ENCODE measurements at regions of chr1 and their contacts with region 1.

Region 1: GRCh38 chr1:67500413-67500959 is 70.3 kb upstream of the SERBP1 start:
- DNase-seq: peak; percentile 77 to 85 (median 81)
- H3K4me3 ChIP-seq: no peak overlapping the region
- H3K4me3 Mint-ChIP-seq: no peak overlapping the region
- H3K27ac ChIP-seq: no peak overlapping the region
- H3K27ac Mint-ChIP-seq: peak overlapping the region in 1 of 7 donors; percentile 29
- H3K4me1 ChIP-seq: peaks cover 2% of the 10 kb centered on the region
- H3K4me1 Mint-ChIP-seq: peaks cover 3 to 5% (median 4%) of the 10 kb centered on the region in 4 donors
- H3K27me3 ChIP-seq: no peaks in the 10 kb centered on the region
- H3K27me3 Mint-ChIP-seq: peaks cover 1 to 3% of the 10 kb centered on the region in 2 donors

Region 2: DNA sequence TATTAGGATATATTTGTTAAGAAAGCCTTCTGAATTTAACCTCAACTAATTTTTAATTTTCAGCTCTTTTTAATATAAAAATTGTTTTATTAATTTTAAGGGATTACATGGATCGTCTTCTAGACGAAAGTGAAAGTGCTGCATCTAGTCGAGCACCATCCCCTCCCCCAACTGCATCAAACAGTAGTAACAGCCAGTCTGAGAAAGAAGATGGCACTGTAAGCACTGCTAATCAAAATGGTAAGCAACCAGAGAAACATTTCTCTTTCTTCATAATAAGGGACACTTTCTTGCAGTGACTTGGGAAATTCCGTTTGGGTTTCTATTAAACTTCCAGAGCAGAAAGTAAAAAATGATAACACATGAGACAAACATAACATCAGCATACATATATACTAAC is 518.8 kb before region 1 on chr1:
- CTCF ChIA-PET with region 1: interaction called, 3 read pairs
- POLR2A ChIA-PET with region 1: no interaction called
- intact Hi-C with region 1: loop called (anchors 5 kb)
- DNase-seq: peak; percentile 55 to 72 (median 67)
- H3K4me3 ChIP-seq: peak overlapping the region in 1 of 2 donors; percentile 9
- H3K4me3 Mint-ChIP-seq: peak overlapping the region; percentile 2 to 80 (median 72)
- H3K27ac ChIP-seq: peak overlapping the region; percentile 61
- H3K27ac Mint-ChIP-seq: peak overlapping the region; percentile 53 to 94 (median 77)
- H3K4me1 ChIP-seq: peaks cover 25% of the 10 kb centered on the region
- H3K4me1 Mint-ChIP-seq: peaks cover 20 to 37% (median 22%) of the 10 kb centered on the region in 4 donors
- H3K27me3 ChIP-seq: no peaks in the 10 kb centered on the region
- H3K27me3 Mint-ChIP-seq: no peaks in the 10 kb centered on the region

Region 3: DNA sequence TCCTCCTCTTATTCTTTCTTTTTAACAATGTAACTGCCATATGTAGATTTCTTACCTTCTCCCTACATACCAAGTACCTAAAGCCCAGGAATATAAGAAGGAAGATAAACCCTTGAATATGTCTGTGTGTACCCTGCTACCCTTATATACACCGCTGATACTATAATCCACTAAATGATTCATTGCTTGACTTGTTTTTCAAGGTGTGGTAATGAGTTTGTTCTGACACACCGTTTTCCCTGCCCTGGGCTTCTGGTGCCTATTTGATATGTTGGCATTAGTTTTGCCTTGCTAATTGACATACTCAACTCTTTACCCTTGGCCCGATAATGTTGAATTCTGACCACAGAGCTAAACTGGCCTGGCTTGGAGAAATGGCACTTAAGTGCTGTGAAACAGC is 269.9 kb before region 1 on chr1:
- CTCF ChIA-PET with region 1: interaction called, 64 read pairs
- POLR2A ChIA-PET with region 1: interaction called, 3 read pairs
- intact Hi-C with region 1: loop called (anchors 1 kb)
- DNase-seq: no peak
- H3K4me3 ChIP-seq: no peak overlapping the region
- H3K4me3 Mint-ChIP-seq: no peak overlapping the region
- H3K27ac ChIP-seq: no peak overlapping the region
- H3K27ac Mint-ChIP-seq: no peak overlapping the region
- H3K4me1 ChIP-seq: no peaks in the 10 kb centered on the region
- H3K4me1 Mint-ChIP-seq: peaks cover 0 to 4% (median 2%) of the 10 kb centered on the region in 4 donors
- H3K27me3 ChIP-seq: no peaks in the 10 kb centered on the region
- H3K27me3 Mint-ChIP-seq: no peaks in the 10 kb centered on the region

Region 4: DNA sequence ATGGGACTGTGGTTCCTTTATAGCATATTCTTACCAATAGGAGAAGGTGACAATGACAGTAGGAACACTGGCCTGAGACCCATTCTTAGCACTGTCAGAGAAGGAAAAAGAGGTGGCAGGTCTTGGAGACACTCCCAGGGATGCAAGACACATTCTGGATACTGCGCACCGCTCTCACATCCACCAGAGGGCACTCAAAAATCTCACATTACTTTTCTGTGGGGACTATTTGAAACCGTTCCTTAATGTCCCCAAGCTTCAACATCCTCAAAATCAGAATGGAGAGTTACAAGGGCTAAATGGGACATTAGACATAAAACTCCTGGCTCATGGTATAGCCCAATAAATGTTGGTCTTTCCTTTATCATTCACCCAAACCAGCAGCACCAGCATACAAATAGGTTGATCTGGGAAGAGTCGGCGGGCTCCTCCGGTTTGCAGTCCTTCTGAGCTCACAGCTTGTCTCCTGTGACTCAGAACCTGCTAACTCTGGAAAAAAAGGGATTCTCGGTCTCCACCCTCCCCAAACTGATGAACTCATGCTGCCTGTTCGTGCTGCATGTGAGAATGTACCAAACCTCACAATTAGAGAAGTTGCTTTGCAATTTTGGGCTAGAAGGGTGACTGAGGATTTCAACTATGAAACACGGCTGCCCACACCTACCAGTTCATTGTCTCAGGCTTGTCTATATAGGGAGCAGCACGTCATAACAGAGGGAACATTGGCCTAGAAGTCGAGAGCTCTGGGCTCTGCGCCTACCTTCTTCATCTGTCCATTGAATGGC is 152.6 kb before region 1 on chr1:
- CTCF ChIA-PET with region 1: interaction called, 15 read pairs
- POLR2A ChIA-PET with region 1: no interaction called
- intact Hi-C with region 1: loop called (anchors 2 kb)
- DNase-seq: no peak
- H3K4me3 ChIP-seq: no peak overlapping the region
- H3K4me3 Mint-ChIP-seq: no peak overlapping the region
- H3K27ac ChIP-seq: no peak overlapping the region
- H3K27ac Mint-ChIP-seq: peak overlapping the region in 1 of 7 donors; percentile 39
- H3K4me1 ChIP-seq: no peaks in the 10 kb centered on the region
- H3K4me1 Mint-ChIP-seq: peaks cover 4 to 11% (median 7%) of the 10 kb centered on the region in 4 donors
- H3K27me3 ChIP-seq: no peaks in the 10 kb centered on the region
- H3K27me3 Mint-ChIP-seq: no peaks in the 10 kb centered on the region

Region 5: DNA sequence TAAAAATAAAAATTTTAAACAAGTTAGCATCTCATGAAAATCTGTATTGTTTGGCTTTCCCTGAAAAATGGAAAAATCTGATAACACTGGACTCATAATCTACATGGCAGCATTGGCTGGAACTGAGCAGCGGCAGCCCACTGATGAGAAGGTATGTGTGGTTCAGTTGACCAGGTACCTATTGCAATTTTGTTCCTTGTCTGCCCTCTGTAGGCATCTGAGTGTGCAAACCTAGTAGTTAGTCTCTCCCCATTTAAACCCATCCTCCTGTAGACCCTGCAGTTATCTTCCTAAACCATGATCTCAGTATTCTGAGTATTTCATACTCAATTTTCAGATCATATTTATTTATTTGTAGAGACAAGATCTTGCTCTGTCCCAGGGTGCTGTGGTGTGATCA is 10.8 kb before region 1 on chr1:
- CTCF ChIA-PET with region 1: interaction called, 46 read pairs
- POLR2A ChIA-PET with region 1: no interaction called
- intact Hi-C with region 1: no loop called
- DNase-seq: peak in 1 of 5 donors; percentile 9
- H3K4me3 ChIP-seq: no peak overlapping the region
- H3K4me3 Mint-ChIP-seq: no peak overlapping the region
- H3K27ac ChIP-seq: no peak overlapping the region
- H3K27ac Mint-ChIP-seq: no peak overlapping the region
- H3K4me1 ChIP-seq: no peaks in the 10 kb centered on the region
- H3K4me1 Mint-ChIP-seq: no peaks in the 10 kb centered on the region
- H3K27me3 ChIP-seq: no peaks in the 10 kb centered on the region
- H3K27me3 Mint-ChIP-seq: no peaks in the 10 kb centered on the region

Region 6: GRCh38 chr1:67524143-67525052 is 23.9 kb after region 1 on chr1:
- CTCF ChIA-PET with region 1: interaction called, 12 read pairs
- POLR2A ChIA-PET with region 1: no interaction called
- intact Hi-C with region 1: no loop called
- DNase-seq: no peak
- H3K4me3 ChIP-seq: no peak overlapping the region
- H3K4me3 Mint-ChIP-seq: no peak overlapping the region
- H3K27ac ChIP-seq: no peak overlapping the region
- H3K27ac Mint-ChIP-seq: peak overlapping the region in 1 of 7 donors; percentile 20
- H3K4me1 ChIP-seq: no peaks in the 10 kb centered on the region
- H3K4me1 Mint-ChIP-seq: no peaks in the 10 kb centered on the region
- H3K27me3 ChIP-seq: no peaks in the 10 kb centered on the region
- H3K27me3 Mint-ChIP-seq: peaks cover 10 to 14% of the 10 kb centered on the region in 2 donors